ENCODE measurements at regions of chr14 and their contacts with region 1.

Region 1: DNA sequence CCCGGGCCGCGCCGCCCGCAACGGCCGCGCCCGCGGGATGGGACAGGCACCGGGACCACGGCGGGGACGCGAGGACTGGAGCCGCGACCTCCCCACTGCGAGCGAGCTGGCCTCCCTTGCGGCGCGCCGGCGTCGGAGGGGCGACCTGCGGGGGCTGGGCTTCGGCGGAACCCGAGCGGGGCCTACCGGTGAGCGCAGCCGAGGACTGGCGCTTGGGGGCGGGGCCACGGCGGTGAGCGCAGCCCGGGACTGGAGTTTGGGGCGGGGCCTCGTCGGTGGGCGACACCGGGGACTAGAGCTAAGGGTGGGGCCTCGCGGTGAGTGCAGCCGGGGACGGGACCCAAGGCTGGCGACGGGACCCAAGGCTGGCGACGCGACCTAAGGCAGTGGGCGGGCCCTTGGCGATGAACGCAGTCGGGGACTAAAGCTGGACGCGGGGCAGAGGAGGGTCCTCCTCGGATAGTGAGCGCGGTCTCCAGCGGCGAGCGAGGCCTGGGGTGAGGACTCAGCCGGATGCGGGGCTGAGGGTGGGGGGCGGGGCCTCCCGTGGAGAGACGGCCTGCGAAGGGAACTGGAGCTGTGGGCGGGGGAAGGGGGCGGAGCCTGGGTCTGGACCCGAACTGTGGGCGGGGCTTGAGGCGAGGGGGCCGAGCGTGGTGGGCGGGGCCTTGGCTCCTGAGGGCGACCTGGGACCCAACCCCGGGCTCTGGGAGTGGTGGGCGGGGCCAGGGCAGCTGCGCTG is at the start of gene BRF1:
- DNase-seq: peak; percentile 99
- H3K4me3 Mint-ChIP-seq: peak within 1 kb of the TSS; percentile 87
- H3K27ac Mint-ChIP-seq: peak within 1 kb of the TSS; percentile 88
- H3K4me1 Mint-ChIP-seq: peaks cover 35% of the 10 kb centered on the region
- H3K27me3 Mint-ChIP-seq: no peaks in the 10 kb centered on the region
- total RNA-seq, gene BRF1: 20.6 to 23.4 TPM

Region 2: DNA sequence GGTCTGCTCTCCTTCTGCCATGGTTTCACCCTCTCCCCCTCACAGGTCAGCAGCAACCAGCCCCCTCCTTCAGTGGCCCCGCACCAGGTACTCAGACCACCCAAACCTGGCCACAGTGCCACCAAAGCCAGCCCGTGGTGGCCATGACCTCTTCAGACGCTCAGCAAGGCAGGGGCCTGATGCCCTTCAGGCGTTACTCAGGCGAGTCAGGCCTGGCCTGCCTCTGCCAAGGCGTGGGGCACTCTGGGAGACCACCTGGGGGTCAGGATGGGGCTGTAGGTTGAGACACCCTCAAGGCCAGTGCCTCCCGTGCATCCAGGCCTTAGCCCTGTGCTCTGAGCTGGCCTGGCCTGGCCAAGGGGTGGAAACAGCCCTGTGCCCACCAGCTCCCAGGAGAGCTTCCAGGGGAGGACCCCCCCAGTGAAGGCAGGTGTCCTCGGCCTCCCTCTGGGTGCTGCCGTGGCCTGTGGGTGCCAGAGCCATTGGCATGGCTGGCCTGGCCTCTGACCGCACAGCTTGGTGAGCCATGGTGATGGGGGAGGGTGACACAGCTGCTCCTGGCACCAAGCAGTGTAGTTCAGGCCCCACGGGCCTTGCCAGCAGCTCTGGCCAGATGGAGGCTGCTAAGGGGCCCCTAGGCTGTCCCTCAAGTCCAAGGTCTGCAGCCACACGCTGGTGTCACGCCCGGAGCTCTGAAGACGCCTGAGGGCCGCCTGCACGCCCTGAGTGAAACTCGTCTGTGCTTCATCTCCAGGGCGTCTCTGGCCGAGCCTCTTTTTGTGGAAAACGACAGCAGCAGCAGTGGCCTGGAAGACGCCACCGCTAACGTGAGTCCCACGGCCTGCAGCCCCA is 1600.8 kb before region 1 on chr14:
- CTCF ChIA-PET with region 1: no interaction called
- intact Hi-C with region 1: loop called (anchors 10 kb)
- DNase-seq: no peak
- H3K4me3 Mint-ChIP-seq: no peak overlapping the region
- H3K27ac Mint-ChIP-seq: no peak overlapping the region
- H3K4me1 Mint-ChIP-seq: no peaks in the 10 kb centered on the region
- H3K27me3 Mint-ChIP-seq: no peaks in the 10 kb centered on the region

Region 3: DNA sequence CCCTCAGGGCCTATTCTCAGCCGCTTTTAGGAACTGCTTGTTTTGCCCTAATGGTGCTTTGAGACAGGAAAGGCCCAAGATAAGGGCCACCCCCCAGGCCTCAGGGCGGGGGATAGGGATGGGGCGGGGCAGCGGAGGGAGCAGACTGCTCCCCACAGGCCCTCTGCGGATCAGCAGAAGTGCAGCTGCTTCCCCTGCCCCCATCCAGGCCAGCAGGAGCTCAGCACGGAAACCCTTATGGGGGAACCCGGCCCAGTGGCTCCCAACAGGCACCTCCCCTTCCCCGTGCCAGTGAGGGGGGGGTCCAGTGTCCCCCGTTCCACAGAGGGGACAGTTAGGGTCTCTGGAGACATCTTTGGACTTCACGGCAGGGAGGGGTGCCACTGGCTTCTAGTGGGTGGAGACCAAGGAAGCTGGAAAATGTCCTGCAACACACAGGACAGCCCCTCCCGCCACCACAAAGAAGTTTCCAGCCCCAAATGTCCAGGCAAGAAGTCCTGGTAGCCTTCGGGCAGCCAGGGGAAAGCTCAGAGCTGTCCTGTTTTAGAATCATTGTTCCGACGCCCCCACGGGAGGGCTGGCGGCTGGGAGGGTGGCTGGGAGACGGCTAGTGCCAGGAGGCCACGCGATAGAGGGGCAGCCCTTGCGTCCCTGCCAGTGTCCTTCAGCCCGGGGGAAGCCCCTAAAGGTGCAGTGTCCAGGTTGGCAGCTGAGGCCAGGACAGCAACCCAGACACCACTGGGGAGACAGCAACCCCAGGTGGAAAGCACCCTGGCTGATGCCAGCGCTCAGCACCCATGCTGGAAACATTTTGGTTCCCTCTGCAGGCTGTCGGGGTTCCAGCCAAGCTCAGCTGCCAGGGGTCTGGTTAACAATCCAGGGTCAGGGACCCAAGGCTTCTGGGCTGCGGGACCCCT is 225.3 kb before region 1 on chr14:
- CTCF ChIA-PET with region 1: no interaction called
- intact Hi-C with region 1: no loop called
- DNase-seq: peak; percentile 79
- H3K4me3 Mint-ChIP-seq: no peak overlapping the region
- H3K27ac Mint-ChIP-seq: peak overlapping the region; percentile 30
- H3K4me1 Mint-ChIP-seq: peaks cover 32% of the 10 kb centered on the region
- H3K27me3 Mint-ChIP-seq: no peaks in the 10 kb centered on the region

Region 4: GRCh38 chr14:105314287-105315200 is 13.6 kb after region 1 on chr14 and contains the start of gene PACS2:
- CTCF ChIA-PET with region 1: interaction called, 3 read pairs
- intact Hi-C with region 1: loop called (anchors 1 kb)
- DNase-seq: peak; percentile 63
- H3K4me3 Mint-ChIP-seq: peak within 1 kb of the TSS; percentile 85
- H3K27ac Mint-ChIP-seq: peak within 1 kb of the TSS; percentile 46
- H3K4me1 Mint-ChIP-seq: peaks cover 25% of the 10 kb centered on the region
- H3K27me3 Mint-ChIP-seq: no peaks in the 10 kb centered on the region
- total RNA-seq, gene PACS2: 25.1 to 29.6 TPM

Measured in activated naive CD4-positive, alpha-beta T cell treated with anti-CD3 and anti-CD28 coated beads for 36 hours (primary cell).